ENCODE measurements at regions of chr13 and their contacts with region 1.

Region 1: DNA sequence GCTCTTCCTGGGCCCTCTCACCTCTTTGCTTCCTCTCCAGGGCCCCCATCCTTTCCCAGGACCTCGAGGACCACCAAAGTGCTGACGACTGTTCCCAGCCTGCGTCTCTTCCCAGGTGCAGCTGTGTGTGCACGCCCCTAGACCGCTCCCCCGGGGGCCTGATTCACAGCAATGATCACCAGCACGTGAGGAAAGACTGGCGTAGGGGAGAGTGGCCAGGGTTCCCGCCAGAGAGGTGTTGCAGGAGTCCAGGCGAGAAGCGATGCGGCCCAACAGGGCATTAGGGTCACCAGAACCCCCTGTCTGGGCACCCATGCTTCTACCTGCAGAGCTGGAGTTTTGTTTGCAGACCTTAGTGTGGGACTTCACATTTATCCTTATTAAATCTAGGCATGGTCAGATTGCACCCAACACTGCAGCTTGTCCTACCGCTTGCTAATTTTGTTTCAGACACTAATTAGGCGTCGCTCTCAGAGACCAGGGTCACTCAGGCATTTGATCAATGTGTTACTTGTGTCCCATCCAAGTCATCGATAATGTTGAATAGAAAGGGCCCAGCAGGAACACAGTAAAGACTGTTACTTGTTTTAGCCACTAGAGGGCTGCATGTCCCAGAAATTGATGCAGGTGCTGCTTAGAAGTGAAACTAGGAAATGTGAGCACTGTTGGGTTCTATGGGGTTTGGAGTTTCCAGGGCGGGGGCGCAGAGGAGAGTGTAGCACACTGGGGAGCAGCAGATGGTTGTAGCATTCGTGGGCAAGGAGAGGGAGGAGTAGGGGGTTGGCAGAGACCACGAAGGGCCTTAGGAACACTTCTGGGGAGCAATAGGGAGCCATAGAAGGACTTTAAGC is 53.2 kb downstream of the CDADC1 start:
- DNase-seq: peak; percentile 72
- ATAC-seq: peak; percentile 73

Region 2: DNA sequence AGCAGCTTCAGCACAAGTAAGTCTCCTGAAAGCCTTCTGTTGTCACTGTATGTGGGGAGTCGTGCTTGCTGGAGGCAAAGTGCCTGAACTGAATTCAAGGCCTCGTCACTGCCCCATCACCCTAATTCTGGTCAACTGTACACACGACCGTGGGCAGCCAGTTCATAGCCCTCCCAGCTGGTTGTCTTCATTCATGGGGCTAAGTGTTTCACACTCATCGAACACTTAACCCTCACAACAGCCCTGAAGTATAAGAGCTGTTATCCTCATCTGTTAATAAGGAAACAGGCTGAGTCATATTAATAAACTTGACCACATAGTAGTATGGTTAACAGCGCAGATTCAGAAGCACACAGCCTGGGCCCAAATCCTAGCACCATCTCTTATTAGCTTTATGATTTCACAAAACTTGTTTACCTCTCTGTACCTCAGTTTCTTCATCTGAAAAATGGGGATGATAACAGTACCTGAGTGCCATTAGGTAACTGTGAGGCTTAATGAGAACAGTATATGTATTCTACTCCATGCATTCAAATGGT is 13.4 kb after region 1 on chr13:
- intact Hi-C with region 1: no loop called
- DNase-seq: no peak
- ATAC-seq: peak; percentile 24

Region 3: DNA sequence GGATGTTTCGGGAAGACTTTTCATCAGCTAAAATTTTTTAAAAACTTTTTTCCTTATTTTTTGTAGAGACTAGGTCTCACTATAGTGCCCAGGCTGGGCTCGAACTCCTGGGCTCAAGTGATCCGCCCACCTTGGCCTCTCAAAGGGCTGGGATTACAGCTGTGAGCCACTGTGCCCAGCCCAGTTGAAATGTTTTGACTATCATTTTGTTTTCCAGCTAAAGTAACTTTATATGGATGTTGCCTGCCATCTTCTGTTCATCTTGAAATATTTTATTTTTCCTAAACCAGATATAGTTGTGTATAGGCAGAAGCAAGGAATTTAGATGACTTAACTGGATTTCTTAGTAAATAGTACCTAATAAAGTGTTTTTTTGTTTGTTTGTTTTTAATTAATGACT is 135.9 kb after region 1 on chr13:
- intact Hi-C with region 1: loop called (anchors 5 kb)
- DNase-seq: peak; percentile 67
- ATAC-seq: peak; percentile 92

Region 4: GRCh38 chr13:49472186-49472585 is 171.2 kb after region 1 on chr13:
- intact Hi-C with region 1: no loop called
- DNase-seq: no peak
- ATAC-seq: no peak

Region 5: GRCh38 chr13:49606747-49607648 is 306.0 kb after region 1 on chr13:
- intact Hi-C with region 1: loop called (anchors 10 kb)
- DNase-seq: peak; percentile 90
- ATAC-seq: peak; percentile 99